ENCODE measurements at regions of chr12 and their contacts with region 1.

Region 1: GRCh38 chr12:110937104-110937641 is 16.8 kb upstream of the MYL2 start:
- DNase-seq: peak in 1 of 2 donors; percentile 13
- H3K4me3 ChIP-seq: no peak overlapping the region
- H3K27ac ChIP-seq: no peak overlapping the region
- H3K4me1 ChIP-seq: no peaks in the 10 kb centered on the region
- H3K27me3 ChIP-seq: no peaks in the 10 kb centered on the region
- CTCF ChIP-seq: peak; percentile 62 to 77 (median 65)
- POLR2A ChIP-seq: no peak

Region 2: DNA sequence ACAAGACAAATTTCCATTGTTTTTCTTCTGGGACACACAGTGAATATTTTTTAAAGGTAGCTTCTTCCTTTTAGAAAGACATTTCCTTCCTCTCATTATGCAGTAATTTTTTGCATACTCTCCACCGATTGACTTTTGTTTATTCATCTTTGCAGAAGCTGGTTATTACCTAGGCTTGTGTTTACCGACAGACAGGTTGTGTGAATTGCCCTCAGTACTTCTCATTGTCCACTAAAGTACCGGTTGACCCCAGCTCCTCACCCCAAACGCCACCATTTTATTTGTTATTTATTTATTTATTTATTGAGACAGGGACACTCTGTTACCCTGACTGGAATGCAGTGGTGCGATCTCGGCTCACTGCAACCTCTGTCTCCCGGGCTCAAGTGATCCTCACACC is 46.6 kb after region 1 on chr12:
- intact Hi-C with region 1: no loop called
- DNase-seq: no peak
- H3K4me3 ChIP-seq: no peak overlapping the region
- H3K27ac ChIP-seq: no peak overlapping the region
- H3K4me1 ChIP-seq: no peaks in the 10 kb centered on the region
- H3K27me3 ChIP-seq: no peaks in the 10 kb centered on the region
- CTCF ChIP-seq: no peak
- POLR2A ChIP-seq: no peak

Region 3: GRCh38 chr12:111304642-111305071 is 367.5 kb after region 1 on chr12:
- intact Hi-C with region 1: loop called (anchors 10 kb)
- DNase-seq: no peak
- H3K4me3 ChIP-seq: no peak overlapping the region
- H3K27ac ChIP-seq: no peak overlapping the region
- H3K4me1 ChIP-seq: no peaks in the 10 kb centered on the region
- H3K27me3 ChIP-seq: no peaks in the 10 kb centered on the region
- CTCF ChIP-seq: no peak
- POLR2A ChIP-seq: no peak

Measured in vagina (tissue), 2 donors.